Right cardiac atrium (tissue), 5 donors: ENCODE measurements at regions of chr7 and their contacts with region 1.

Region 1: GRCh38 chr7:86469680-86470295 is 173.9 kb upstream of the GRM3 start:
- DNase-seq: peak; percentile 18 to 64 (median 35)
- ATAC-seq: peak; percentile 45 to 67
- H3K4me3 ChIP-seq: no peak overlapping the region
- H3K27ac ChIP-seq: no peak overlapping the region
- H3K4me1 ChIP-seq: no peaks in the 10 kb centered on the region
- H3K27me3 ChIP-seq: no peaks in the 10 kb centered on the region

Region 2: DNA sequence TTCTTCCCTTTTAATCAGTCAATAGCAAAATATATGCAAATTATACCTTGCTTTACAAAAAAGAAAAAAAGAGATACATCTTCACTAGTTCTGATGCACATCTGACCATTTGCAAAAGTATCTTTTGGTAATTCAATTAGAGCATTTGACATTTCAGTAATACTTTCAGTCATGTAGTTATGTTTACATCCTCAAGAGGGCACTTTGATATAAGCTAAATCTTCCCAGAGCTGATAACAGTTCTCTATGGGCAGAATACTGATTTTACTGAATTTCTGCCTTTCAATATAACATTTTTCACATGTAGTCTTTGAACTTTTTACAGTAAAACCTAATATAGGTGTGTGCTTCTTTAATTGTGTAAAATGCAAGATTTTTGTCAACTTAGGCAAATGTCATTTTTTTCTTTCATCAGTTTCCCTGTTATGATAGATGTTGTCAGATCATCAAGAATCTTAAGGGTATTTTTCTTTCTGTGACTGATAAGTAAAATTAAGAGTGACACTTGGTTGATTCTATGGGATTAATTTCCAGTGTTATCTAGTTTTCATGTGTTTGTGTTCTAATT is 579.5 kb before region 1 on chr7:
- intact Hi-C with region 1: loop called in 3 of 4 experiments (anchors 5 to 10 kb)
- DNase-seq: no peak
- ATAC-seq: no peak
- H3K4me3 ChIP-seq: no peak overlapping the region
- H3K27ac ChIP-seq: no peak overlapping the region
- H3K4me1 ChIP-seq: no peaks in the 10 kb centered on the region
- H3K27me3 ChIP-seq: no peaks in the 10 kb centered on the region

Region 3: GRCh38 chr7:86158111-86158510 is 311.7 kb before region 1 on chr7:
- intact Hi-C with region 1: no loop called
- DNase-seq: no peak
- ATAC-seq: no peak
- H3K4me3 ChIP-seq: no peak overlapping the region
- H3K27ac ChIP-seq: no peak overlapping the region
- H3K4me1 ChIP-seq: no peaks in the 10 kb centered on the region
- H3K27me3 ChIP-seq: no peaks in the 10 kb centered on the region